Brain microvascular endothelial cell (primary cell): ENCODE measurements at regions of chr20 and their contacts with region 1.

Region 1: GRCh38 chr20:4592316-4593148 is 129.2 kb upstream of the PRND start:
- DNase-seq: no peak
- H3K4me3 ChIP-seq: peak overlapping the region; percentile 54
- H3K27ac ChIP-seq: peak overlapping the region; percentile 55
- H3K27me3 ChIP-seq: no peaks in the 10 kb centered on the region
- CTCF ChIP-seq: peak; percentile 61

Region 2: DNA sequence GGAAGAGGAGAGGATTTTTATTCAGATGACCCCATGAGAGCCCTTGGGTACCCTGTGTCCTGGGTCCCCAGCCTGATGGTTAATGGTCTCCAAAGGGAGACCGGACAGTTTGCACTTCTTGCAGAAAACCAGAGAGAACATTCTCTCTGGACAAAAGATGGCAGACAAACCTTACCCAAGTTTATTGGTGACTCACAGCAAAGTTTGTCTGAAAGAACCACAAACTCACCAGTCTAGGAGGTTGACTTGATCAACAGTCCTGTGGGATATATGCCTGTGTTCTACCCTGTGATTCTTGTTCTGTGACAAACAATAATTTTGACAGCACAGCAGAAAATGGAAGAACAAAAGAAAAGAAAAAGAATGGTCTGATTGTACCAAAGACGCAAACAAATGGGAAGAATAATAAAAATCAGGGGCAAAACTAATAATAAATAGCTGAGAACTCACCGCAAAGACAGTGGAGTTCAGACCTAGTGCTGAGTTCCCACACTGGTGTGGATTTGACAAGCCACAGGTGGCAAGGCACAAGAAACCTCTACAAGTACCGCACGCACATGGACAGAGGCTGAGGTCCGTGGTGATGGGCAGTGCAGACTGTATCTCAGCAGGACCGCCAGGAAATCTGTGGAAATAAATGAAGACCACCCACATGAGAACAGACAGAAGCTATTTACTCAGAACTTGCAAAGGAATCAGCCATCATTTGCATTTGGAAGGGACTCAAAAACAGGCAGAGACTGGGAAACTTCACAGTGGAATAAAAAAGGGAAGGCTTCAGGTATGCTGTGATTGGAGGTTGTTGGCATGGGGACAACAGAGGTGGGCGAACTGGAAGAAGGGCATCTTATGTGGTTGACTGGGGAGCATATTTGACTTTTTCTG is 331.0 kb before region 1 on chr20:
- in situ Hi-C with region 1: loop called (anchors 25 kb)
- DNase-seq: peak; percentile 36
- H3K4me3 ChIP-seq: no peak overlapping the region
- H3K27ac ChIP-seq: no peak overlapping the region
- H3K27me3 ChIP-seq: no peaks in the 10 kb centered on the region
- CTCF ChIP-seq: peak; percentile 21

Region 3: DNA sequence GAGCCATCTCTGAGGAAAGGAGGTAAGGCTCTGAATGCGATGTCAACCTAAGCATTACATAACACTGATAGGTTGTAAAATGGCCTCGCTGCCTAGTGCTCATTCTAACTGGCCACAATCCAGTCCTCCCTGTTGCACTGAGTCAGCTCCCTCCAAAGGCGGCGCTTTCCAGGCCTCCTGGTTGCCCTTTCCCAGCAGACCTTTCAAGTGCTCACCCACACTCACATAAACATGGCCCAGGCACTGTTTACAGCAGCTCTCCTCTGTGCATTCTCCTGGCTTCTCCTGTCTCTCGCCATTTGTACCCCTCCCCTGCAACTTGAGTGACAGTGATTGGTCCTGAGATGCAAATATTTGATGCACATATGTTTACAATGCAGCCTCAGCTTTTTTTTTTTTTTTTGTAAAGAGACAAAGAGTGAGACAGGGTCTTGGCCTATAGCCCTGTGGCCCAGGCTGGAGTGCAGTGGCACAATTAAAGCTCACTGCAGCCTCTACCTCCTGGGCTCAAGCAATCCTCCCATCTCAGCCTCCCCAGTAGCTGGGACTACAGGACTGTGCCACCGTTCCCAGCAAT is 92.4 kb after region 1 on chr20:
- in situ Hi-C with region 1: no loop called
- DNase-seq: peak; percentile 34
- H3K4me3 ChIP-seq: no peak overlapping the region
- H3K27ac ChIP-seq: no peak overlapping the region
- H3K27me3 ChIP-seq: no peaks in the 10 kb centered on the region
- CTCF ChIP-seq: no peak